ENCODE measurements at regions of chr18 and their contacts with region 1.

Region 1: DNA sequence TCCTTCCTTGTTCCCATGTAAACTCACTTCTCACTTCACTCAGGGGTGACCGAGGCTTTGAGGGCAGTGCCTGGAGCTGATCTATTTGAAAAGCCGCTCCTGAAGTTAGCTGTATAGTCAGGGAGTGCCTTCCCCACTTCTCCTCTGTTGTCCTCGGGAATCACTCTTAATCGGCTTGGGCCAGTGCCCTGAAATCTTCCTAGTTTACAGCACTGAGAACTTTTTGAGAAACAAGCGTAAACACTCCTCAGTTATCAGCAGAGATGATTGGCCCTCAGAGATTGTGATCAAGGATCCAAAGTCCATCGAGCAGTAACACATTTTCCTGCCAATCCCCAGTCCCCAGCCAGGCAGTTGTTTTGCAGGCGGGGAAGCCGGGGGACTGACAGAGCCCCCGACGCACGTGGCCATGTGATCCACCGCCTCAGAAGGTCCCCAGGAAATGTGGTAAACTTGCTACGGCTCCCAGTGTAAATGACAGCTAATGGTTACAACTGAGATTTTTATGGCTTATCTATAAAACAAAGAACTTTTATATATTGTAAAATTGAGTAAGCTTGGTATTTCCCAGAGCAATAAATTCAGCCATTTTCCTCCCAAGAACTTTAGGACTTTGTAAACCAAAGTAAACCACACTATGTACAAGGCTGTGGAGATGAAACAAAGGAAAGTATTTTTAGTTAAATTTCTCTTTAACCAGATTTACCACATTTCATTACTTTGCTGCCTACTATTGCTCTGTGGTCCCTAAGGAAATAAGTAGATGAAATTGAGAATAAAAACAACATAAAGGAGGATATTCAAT is 53.5 kb downstream of the C18orf63 start:
- DNase-seq: no peak
- H3K4me3 ChIP-seq: no peak overlapping the region
- H3K27ac ChIP-seq: no peak overlapping the region
- H3K4me1 ChIP-seq: no peaks in the 10 kb centered on the region
- H3K27me3 ChIP-seq: no peaks in the 10 kb centered on the region
- CTCF ChIP-seq: no peak

Region 2: DNA sequence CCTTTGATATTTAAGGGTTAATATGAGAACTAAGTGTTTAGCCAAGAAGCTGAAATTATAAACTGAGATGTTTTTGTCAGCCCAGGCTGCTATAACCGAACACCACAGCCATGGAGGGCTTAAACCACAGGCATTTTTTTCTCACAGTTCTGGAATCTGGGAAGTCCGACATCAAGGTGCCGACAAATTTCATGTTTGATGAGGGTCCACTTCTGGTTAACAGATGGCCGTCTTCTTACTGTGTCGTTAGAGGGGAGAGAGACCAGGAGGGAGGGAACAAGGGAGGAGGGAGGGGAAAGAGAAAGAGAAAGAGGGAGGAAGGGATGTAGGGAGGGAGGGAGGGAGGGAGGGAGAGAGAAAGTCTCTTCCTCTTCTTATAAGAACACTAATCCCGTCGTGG is 120.6 kb after region 1 on chr18:
- CTCF ChIA-PET with region 1: no interaction called
- dilution Hi-C with region 1: no loop called
- in situ Hi-C with region 1: loop called in 1 of 2 experiments (anchors 10 kb)
- intact Hi-C with region 1: no loop called
- DNase-seq: no peak
- H3K4me3 ChIP-seq: no peak overlapping the region
- H3K27ac ChIP-seq: no peak overlapping the region
- H3K4me1 ChIP-seq: no peaks in the 10 kb centered on the region
- H3K27me3 ChIP-seq: no peaks in the 10 kb centered on the region
- CTCF ChIP-seq: no peak

Measured in mammary epithelial cell (primary cell).